GM23248 (cell line): ENCODE measurements at regions of chr9 and their contacts with region 1.

Region 1: DNA sequence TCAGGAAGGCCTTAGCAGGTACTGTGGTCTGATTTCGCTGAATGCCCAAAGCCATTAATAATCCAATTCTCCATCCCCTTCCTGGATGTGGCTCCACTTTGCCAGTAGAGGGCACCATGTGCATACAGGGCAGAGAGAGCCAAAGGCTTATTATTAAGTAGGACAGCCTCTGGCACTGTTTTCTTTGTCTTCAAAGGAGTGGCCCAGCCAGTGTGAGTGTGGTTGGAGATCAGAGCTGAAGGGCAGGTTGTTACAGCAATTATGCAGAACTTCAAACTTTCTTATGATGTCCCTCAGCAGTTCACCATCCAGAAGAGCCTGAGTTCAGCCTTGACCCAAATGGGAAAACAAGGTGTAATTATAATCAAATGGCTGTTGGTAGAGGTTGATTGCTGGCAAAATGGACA is 38.6 kb upstream of the CEMIP2 start:
- DNase-seq: peak; percentile 84
- H3K4me3 ChIP-seq: no peak overlapping the region
- H3K27ac ChIP-seq: no peak overlapping the region
- H3K4me1 ChIP-seq: no peaks in the 10 kb centered on the region
- H3K27me3 ChIP-seq: no peaks in the 10 kb centered on the region

Region 2: DNA sequence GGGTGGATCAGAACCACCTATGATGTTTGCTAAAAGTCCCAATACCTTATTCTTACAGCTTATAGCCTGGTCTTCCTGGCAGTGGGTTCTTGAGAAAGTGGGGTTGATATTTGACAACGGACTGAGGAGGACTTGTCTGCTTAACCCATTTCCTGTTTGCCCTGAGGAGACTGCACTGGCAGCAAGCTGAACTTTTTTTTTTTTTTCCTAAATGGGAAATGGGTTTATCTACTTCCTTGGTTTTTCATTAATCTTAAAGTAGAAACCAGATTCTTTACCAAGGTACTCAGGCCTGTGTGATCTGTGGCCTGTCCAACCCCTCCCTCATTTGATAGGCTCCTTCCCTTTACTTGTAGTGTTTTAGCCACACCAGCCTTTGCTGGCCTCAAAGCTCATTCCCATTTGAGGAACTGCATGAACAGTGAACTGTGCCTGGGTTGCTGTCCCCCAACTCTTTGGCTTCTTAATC is 206.4 kb after region 1 on chr9:
- in situ Hi-C with region 1: loop called (anchors 10 kb)
- DNase-seq: no peak
- H3K4me3 ChIP-seq: no peak overlapping the region
- H3K27ac ChIP-seq: no peak overlapping the region
- H3K4me1 ChIP-seq: no peaks in the 10 kb centered on the region
- H3K27me3 ChIP-seq: no peaks in the 10 kb centered on the region

Region 3: DNA sequence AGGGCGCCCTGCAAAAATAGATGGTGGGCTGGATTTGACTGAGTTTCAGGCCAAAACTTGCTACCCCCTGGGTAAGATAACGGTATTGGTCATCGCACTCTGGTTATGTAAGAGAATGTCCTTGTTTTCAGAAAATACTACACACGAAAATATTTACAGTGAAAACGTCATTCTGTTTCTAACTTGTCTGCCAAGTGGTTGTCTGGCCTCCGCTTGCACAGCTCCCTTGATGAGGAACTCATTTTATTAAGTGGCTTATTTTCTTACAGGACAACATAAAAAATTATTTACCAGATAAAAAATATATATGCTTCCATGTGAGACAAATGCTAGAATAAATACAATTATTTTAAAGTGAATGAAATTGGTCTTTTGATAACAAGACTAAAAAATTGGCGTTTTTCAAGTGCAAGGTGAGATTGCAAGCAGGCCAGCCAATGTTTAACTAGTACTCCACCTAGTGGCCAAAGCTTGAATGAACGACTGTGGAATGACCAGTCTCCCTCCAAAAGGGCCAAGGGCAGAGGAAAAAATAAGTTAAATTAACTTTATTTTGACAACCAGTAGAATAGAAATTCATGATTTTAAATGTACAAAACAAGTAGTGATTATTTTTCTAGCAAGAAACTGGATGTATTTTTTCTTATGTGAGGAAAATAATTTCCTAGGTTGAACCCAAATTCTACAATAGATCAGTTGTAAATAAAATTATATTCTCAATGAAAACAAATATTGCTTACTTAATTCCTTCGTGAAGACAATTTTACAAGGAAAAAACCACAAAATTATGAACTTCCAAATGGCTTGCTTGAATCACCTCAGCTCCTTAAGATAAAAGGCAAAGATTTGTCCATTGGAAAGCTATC is 464.9 kb after region 1 on chr9:
- in situ Hi-C with region 1: loop called (anchors 25 kb)
- DNase-seq: peak; percentile 67
- H3K4me3 ChIP-seq: no peak overlapping the region
- H3K27ac ChIP-seq: no peak overlapping the region
- H3K4me1 ChIP-seq: no peaks in the 10 kb centered on the region
- H3K27me3 ChIP-seq: peaks cover 7% of the 10 kb centered on the region